Right cardiac atrium (tissue), 5 donors: ENCODE measurements at regions of chr2 and their contacts with region 1.

Region 1: DNA sequence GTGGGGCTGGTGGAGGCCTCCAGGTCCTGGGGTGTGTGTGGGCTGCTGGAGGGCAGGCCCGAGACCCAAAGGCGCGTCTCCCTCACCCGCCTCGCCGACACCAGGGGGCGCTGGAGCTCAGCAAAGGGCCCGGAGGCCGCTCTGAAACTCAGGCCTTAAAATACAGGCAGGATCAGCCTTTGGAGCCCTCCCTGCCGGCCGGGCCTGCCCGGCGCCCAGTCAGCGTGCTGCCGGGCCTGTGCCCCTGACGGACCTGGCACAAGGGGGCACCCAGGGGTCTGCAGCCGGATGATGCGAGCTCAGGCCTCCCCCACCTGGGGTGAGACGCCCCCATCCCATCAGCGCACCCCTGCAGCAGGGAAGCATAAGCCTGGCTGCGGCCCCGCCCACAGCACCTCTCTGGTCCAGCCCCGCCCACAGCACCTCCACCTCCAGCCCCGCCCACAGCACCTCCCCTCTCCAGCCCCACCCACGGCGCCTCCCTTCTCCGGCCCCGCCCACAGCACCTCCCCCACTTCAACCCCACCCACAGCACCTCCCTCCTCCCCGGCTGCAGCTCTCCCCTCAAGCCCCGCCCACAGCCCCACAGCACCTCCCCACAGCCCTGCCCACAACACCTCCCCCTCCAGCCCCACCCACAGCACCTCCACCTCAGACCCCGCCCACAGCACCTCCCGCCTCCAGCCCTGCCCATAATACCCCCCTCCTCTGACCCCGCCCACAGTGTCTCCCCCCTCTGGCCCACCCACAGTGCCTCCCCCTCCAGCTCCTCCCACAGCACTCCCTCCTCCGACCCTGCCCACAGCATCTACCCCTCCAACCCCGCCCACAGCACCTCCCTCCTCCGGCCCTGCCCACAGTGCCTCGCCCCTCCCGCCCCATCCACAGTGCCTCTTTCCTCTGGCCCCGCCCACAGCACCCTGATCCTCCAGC is 92.8 kb upstream of the OTOS start:
- DNase-seq: peak; percentile 86 to 94 (median 94)
- ATAC-seq: peak; percentile 82 to 83
- H3K4me3 ChIP-seq: no peak overlapping the region
- H3K27ac ChIP-seq: peak overlapping the region; percentile 78
- H3K4me1 ChIP-seq: peaks cover 3% of the 10 kb centered on the region
- H3K27me3 ChIP-seq: no peaks in the 10 kb centered on the region

Region 2: GRCh38 chr2:240160291-240161086 is 72.7 kb before region 1 on chr2:
- intact Hi-C with region 1: no loop called
- DNase-seq: no peak
- ATAC-seq: peak in 1 of 2 donors; percentile 17
- H3K4me3 ChIP-seq: no peak overlapping the region
- H3K27ac ChIP-seq: no peak overlapping the region
- H3K4me1 ChIP-seq: no peaks in the 10 kb centered on the region
- H3K27me3 ChIP-seq: no peaks in the 10 kb centered on the region

Region 3: GRCh38 chr2:240293557-240294461 is 60.6 kb after region 1 on chr2:
- intact Hi-C with region 1: loop called in 1 of 4 experiments (anchors 10 kb)
- DNase-seq: peak; percentile 47 to 76 (median 76)
- ATAC-seq: peak; percentile 41 to 65
- H3K4me3 ChIP-seq: no peak overlapping the region
- H3K27ac ChIP-seq: peak overlapping the region; percentile 58
- H3K4me1 ChIP-seq: peaks cover 3% of the 10 kb centered on the region
- H3K27me3 ChIP-seq: no peaks in the 10 kb centered on the region

Region 4: GRCh38 chr2:240339996-240340761 is 107.0 kb after region 1 on chr2:
- intact Hi-C with region 1: loop called in 1 of 4 experiments (anchors 10 kb)
- DNase-seq: no peak
- ATAC-seq: peak; percentile 30 to 54
- H3K4me3 ChIP-seq: no peak overlapping the region
- H3K27ac ChIP-seq: no peak overlapping the region
- H3K4me1 ChIP-seq: no peaks in the 10 kb centered on the region
- H3K27me3 ChIP-seq: no peaks in the 10 kb centered on the region

Region 5: GRCh38 chr2:240363746-240364581 is 130.7 kb after region 1 on chr2:
- intact Hi-C with region 1: no loop called
- DNase-seq: peak in 2 of 3 donors; percentile 18 to 30
- ATAC-seq: no peak
- H3K4me3 ChIP-seq: no peak overlapping the region
- H3K27ac ChIP-seq: no peak overlapping the region
- H3K4me1 ChIP-seq: no peaks in the 10 kb centered on the region
- H3K27me3 ChIP-seq: no peaks in the 10 kb centered on the region